Activated naive CD4-positive, alpha-beta T cell treated with anti-CD3 and anti-CD28 coated beads, Interleukin-2, amount 10 ng/mL, durations not matched to agents 7 days and 5 days (primary cell): ENCODE measurements at regions of chr2 and their contacts with region 1.

Region 1: DNA sequence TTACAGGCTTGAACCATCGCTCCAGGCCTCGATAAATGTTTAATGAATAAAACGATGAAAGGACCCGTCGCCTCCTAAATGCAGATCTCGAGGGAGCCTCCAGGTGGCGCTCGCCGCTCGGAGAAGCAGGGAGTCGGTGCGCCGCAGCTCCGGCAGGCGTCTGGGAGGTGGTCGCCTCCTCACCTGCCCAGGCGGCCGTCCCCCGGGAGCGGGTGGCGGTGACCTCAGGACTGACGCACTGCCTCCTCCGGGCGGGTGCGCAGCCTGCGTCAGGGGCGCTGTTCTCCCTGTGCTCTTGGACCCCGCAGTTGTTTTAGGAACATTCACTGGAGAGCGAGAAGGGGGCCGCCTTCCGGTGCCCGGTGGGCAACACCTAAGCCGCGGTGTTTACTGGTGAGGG is 38.6 kb upstream of the POLE4 start:
- DNase-seq: peak; percentile 78
- H3K4me3 Mint-ChIP-seq: peak overlapping the region; percentile 27
- H3K27ac Mint-ChIP-seq: no peak overlapping the region
- H3K4me1 Mint-ChIP-seq: peaks cover 12% of the 10 kb centered on the region
- H3K27me3 Mint-ChIP-seq: peaks cover 48% of the 10 kb centered on the region

Region 2: GRCh38 chr2:74864846-74865722 is 54.7 kb before region 1 on chr2:
- CTCF ChIA-PET with region 1: no interaction called
- DNase-seq: peak; percentile 15
- H3K4me3 Mint-ChIP-seq: no peak overlapping the region
- H3K27ac Mint-ChIP-seq: peak overlapping the region; percentile 11
- H3K4me1 Mint-ChIP-seq: peaks cover 46% of the 10 kb centered on the region
- H3K27me3 Mint-ChIP-seq: no peaks in the 10 kb centered on the region

Region 3: GRCh38 chr2:74876081-74876886 is 43.5 kb before region 1 on chr2:
- CTCF ChIA-PET with region 1: no interaction called
- DNase-seq: peak; percentile 60
- H3K4me3 Mint-ChIP-seq: no peak overlapping the region
- H3K27ac Mint-ChIP-seq: peak overlapping the region; percentile 50
- H3K4me1 Mint-ChIP-seq: peaks cover 3% of the 10 kb centered on the region
- H3K27me3 Mint-ChIP-seq: no peaks in the 10 kb centered on the region

Region 4: GRCh38 chr2:74893332-74893731 is 26.5 kb before region 1 on chr2:
- CTCF ChIA-PET with region 1: no interaction called
- DNase-seq: no peak
- H3K4me3 Mint-ChIP-seq: no peak overlapping the region
- H3K27ac Mint-ChIP-seq: no peak overlapping the region
- H3K4me1 Mint-ChIP-seq: no peaks in the 10 kb centered on the region
- H3K27me3 Mint-ChIP-seq: no peaks in the 10 kb centered on the region

Region 5: DNA sequence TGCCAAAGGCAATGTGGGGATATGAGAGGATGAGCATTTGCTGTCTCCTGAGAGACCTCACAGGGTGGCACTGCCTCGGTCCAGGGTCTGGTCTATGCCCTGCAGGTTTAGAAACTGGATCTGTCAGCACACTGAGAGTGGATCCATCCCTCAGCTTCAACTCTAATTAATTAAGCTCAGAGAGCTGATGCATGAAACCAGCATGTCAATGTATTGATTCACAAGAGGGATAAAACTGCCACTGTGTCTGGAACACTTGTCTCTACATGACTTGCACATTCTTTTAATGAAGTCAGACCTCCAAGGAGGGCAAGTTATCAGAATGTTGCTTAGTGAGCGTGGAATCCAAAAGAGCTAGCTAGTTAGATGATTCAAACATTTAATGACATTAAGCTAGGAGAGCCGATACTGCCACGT is 16.2 kb after region 1 on chr2:
- CTCF ChIA-PET with region 1: interaction called, 13 read pairs
- DNase-seq: no peak
- H3K4me3 Mint-ChIP-seq: no peak overlapping the region
- H3K27ac Mint-ChIP-seq: no peak overlapping the region
- H3K4me1 Mint-ChIP-seq: no peaks in the 10 kb centered on the region
- H3K27me3 Mint-ChIP-seq: peaks cover 3% of the 10 kb centered on the region

Region 6: DNA sequence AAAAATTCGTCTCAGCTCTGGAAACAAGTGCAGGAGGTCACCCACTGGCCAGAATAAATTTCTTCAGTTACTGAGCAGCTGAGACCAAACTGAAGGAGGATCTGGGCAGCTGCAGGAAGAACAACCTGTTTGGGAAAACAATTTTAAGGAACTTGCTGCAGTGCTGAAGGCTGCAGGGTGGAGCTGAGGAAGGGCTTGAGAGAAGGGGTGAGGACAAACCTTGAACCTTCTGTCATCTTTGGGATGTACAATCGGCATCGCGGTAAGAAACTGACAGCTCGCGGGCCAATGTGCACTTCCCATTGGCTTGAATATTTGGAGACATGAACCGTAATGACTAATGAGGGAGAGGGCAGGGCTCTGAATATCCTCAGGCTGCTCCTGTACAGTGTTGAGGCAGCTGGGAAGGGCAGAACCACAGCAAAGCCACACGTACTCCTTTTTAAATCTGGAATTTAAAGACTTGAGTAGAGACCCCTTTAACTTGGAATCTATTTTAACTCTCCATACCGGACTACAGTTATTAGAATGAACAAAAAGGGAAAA is 189.2 kb after region 1 on chr2:
- CTCF ChIA-PET with region 1: no interaction called
- DNase-seq: no peak
- H3K4me3 Mint-ChIP-seq: no peak overlapping the region
- H3K27ac Mint-ChIP-seq: no peak overlapping the region
- H3K4me1 Mint-ChIP-seq: no peaks in the 10 kb centered on the region
- H3K27me3 Mint-ChIP-seq: peaks cover 12% of the 10 kb centered on the region